BJ (cell line): ENCODE measurements at regions of chr19 and their contacts with region 1.

Region 1: GRCh38 chr19:12757544-12758274 is 6.1 kb downstream of the BEST2 start:
- DNase-seq: no peak
- H3K4me3 ChIP-seq: peak overlapping the region; percentile 33
- H3K27me3 ChIP-seq: peaks cover 5% of the 10 kb centered on the region; the same call in 1 of the 2 replicates
- CTCF ChIP-seq: peak; percentile 75

Region 2: GRCh38 chr19:12521996-12522395 is 235.7 kb before region 1 on chr19:
- CTCF ChIA-PET with region 1: no interaction called
- POLR2A ChIA-PET with region 1: no interaction called
- DNase-seq: no peak
- H3K4me3 ChIP-seq: no peak overlapping the region
- H3K27me3 ChIP-seq: no peaks in the 10 kb centered on the region
- CTCF ChIP-seq: no peak

Region 3: GRCh38 chr19:12689581-12690216 is 68.0 kb before region 1 on chr19:
- CTCF ChIA-PET with region 1: no interaction called
- POLR2A ChIA-PET with region 1: no interaction called
- DNase-seq: no peak
- H3K4me3 ChIP-seq: no peak overlapping the region
- H3K27me3 ChIP-seq: no peaks in the 10 kb centered on the region
- CTCF ChIP-seq: no peak

Region 4: GRCh38 chr19:12716861-12717260 is 40.8 kb before region 1 on chr19:
- CTCF ChIA-PET with region 1: interaction called, 22 read pairs
- POLR2A ChIA-PET with region 1: no interaction called
- DNase-seq: no peak
- H3K4me3 ChIP-seq: no peak overlapping the region
- H3K27me3 ChIP-seq: no peaks in the 10 kb centered on the region
- CTCF ChIP-seq: peak; percentile 44; the same call in 1 of the 2 replicates

Region 5: GRCh38 chr19:12722566-12723380 is 34.9 kb before region 1 on chr19:
- CTCF ChIA-PET with region 1: interaction called, 22 read pairs
- POLR2A ChIA-PET with region 1: no interaction called
- DNase-seq: peak; percentile 81
- H3K4me3 ChIP-seq: peak overlapping the region; percentile 67
- H3K27me3 ChIP-seq: no peaks in the 10 kb centered on the region
- CTCF ChIP-seq: no peak

Region 6: GRCh38 chr19:12736995-12737834 is 20.5 kb before region 1 on chr19 and contains the start of gene GET3:
- CTCF ChIA-PET with region 1: interaction called, 29 read pairs
- POLR2A ChIA-PET with region 1: no interaction called
- DNase-seq: peak; percentile 100
- H3K4me3 ChIP-seq: peak within 1 kb of the TSS; percentile 87
- H3K27me3 ChIP-seq: no peaks in the 10 kb centered on the region
- CTCF ChIP-seq: no peak
- polyA plus RNA-seq, gene GET3: 163 and 250 TPM in 2 replicates

Region 7: GRCh38 chr19:12777217-12778016 is 19.7 kb after region 1 on chr19:
- CTCF ChIA-PET with region 1: interaction called, 43 read pairs
- POLR2A ChIA-PET with region 1: no interaction called
- DNase-seq: no peak
- H3K4me3 ChIP-seq: peak overlapping the region; percentile 65
- H3K27me3 ChIP-seq: no peaks in the 10 kb centered on the region
- CTCF ChIP-seq: peak; percentile 99

Region 8: DNA sequence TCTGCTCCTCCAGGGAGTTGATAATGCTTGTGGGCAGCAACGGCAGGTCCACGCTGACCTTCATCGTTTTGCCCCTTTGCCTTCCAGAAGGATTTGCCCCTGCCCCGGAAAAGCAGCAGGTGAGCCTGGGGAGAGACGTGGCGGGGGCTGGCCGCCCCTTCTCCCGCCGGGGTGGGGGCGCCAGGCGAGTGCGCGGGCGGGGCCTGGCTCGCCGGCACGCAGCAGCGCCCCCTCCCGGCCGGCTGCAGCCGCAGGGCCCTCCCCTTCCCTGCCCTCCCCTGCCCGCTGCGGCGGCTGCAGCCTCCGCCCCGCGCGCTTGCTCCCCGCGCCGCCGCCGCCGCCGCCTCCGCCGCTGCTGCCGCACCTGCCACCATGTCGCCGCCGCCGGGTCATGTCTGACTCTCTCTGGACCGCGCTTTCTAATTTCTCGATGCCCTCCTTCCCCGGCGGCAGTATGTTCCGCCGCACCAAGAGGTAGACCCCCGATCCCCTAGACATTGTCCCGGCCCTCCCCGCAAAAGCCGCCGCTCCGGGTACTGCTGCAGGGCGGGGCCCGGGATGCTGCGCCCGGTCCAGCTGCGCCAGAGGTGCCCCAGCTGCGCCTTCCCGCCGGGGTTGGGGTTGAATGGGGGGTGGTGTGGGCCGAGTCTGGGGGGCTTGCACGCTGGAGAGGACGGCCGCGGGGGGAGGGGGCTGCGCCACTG is 80.6 kb after region 1 on chr19 and contains the start of gene MAST1:
- CTCF ChIA-PET with region 1: interaction called, 355 read pairs
- POLR2A ChIA-PET with region 1: no interaction called
- DNase-seq: no peak
- H3K4me3 ChIP-seq: no peak within 1 kb of the TSS
- H3K27me3 ChIP-seq: peaks cover 42% of the 10 kb centered on the region
- CTCF ChIP-seq: no peak; the same call in 1 of the 2 replicates
- polyA plus RNA-seq, gene MAST1: 0.25 TPM in 1 of 2 replicates, not detected in the other

Region 9: DNA sequence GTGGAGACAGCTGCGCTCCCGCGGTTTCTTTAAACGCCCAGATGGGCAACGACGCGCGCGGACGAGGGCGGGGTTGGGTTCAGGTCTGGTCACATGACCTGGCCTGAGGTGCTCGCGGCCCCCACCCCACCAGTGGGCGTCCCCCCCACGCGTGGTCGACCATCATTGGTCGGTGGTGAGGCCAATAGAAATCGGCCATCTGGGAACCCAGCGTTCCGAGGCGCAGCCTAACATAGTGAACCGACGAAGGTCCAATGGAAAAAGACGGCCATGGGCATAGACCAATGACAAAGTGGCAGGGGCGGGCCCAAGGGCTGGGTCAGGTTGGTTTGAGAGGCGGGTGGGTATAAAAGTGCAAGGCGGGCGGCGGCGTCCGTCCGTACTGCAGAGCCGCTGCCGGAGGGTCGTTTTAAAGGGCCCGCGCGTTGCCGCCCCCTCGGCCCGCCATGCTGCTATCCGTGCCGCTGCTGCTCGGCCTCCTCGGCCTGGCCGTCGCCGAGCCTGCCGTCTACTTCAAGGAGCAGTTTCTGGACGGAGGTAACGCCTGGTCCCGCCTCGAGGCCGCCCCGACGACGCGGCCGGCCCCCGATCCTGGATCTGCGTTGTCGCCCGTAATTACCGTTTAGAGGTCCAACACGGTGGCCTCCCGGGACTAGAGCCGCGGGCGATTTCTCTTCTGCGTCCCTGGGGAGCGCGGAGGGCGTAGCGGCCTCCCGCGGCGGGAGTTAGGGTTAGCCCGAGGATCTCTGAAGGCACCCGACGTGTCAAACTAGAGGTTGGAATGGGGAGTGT is 180.7 kb after region 1 on chr19 and contains the start of gene CALR:
- CTCF ChIA-PET with region 1: no interaction called
- POLR2A ChIA-PET with region 1: no interaction called
- DNase-seq: peak; percentile 94
- H3K4me3 ChIP-seq: peak within 1 kb of the TSS; percentile 92
- H3K27me3 ChIP-seq: no peaks in the 10 kb centered on the region
- CTCF ChIP-seq: peak; percentile 43
- polyA plus RNA-seq, gene CALR: 1,647 and 1,829 TPM in 2 replicates

Region 10: GRCh38 chr19:12983542-12984142 is 225.9 kb after region 1 on chr19:
- CTCF ChIA-PET with region 1: no interaction called
- POLR2A ChIA-PET with region 1: no interaction called
- DNase-seq: no peak
- H3K4me3 ChIP-seq: peak overlapping the region; percentile 39
- H3K27me3 ChIP-seq: no peaks in the 10 kb centered on the region
- CTCF ChIP-seq: peak; percentile 71